ENCODE measurements at regions of chr21 and their contacts with region 1.

Region 1: GRCh38 chr21:29181799-29182470 is 51.5 kb downstream of the MAP3K7CL start:
- DNase-seq: no peak
- H3K4me3 ChIP-seq: no peak overlapping the region
- CTCF ChIP-seq: no peak
- POLR2A ChIP-seq: no peak

Region 2: GRCh38 chr21:28899744-28900143 is 282.2 kb before region 1 on chr21:
- intact Hi-C with region 1: no loop called
- DNase-seq: no peak
- H3K4me3 ChIP-seq: no peak overlapping the region
- CTCF ChIP-seq: no peak
- POLR2A ChIP-seq: no peak

Region 3: DNA sequence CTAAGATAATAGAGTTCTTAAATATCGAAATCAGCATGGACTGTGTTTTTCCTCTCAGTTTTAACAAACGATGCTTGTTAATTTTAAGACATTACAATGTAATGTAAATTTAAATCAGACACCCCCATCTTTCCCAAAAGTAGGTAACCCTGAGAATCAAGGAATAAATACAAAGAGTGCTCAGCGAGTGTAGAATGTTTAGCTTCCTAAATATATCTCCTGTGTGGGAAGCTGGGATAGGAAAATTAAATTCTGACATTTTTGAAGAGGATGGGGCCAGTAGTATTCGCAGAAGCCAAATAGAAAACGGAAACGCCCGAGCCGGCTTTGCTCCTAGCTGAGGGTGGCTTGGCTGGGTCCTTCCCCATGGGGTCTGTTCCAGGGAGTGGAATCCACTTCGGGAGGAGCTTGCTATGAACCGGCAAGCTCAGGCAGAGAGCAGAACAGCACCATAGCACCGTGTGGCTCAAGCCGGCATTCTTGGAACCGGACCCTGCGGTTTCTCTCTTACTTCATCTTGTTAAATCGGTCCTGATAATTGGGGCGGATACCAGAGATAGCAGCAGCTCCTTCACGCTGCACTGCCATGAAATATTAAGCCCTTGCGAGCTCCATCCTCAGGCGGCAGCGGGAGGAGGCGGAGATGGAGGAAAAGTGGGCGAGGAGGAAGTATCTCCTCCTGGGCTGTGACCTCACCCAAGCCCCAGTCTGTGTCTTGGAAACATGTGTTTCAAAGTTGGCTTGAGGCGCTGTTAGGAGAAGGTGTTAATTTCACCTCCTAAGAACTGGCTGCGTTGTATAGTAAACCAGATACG is 26.6 kb before region 1 on chr21:
- intact Hi-C with region 1: loop called (anchors 1 kb)
- DNase-seq: peak; percentile 23 to 88
- H3K4me3 ChIP-seq: no peak overlapping the region
- CTCF ChIP-seq: no peak
- POLR2A ChIP-seq: no peak

Region 4: GRCh38 chr21:29829564-29830275 is 647.8 kb after region 1 on chr21:
- intact Hi-C with region 1: no loop called
- DNase-seq: no peak
- H3K4me3 ChIP-seq: no peak overlapping the region
- CTCF ChIP-seq: no peak
- POLR2A ChIP-seq: no peak